Common myeloid progenitor, CD34-positive (primary cell): ENCODE measurements at regions of chr2 and their contacts with region 1.

Region 1: GRCh38 chr2:20962939-20963557 is 80.8 kb downstream of the APOB start:
- DNase-seq: peak; percentile 51 to 81 (median 68)
- H3K4me3 ChIP-seq: no peak overlapping the region
- H3K27ac ChIP-seq: no peak overlapping the region
- H3K4me1 ChIP-seq: no peaks in the 10 kb centered on the region
- H3K27me3 ChIP-seq: peaks cover 0 to 5% (median 4%) of the 10 kb centered on the region in 5 experiments

Region 2: DNA sequence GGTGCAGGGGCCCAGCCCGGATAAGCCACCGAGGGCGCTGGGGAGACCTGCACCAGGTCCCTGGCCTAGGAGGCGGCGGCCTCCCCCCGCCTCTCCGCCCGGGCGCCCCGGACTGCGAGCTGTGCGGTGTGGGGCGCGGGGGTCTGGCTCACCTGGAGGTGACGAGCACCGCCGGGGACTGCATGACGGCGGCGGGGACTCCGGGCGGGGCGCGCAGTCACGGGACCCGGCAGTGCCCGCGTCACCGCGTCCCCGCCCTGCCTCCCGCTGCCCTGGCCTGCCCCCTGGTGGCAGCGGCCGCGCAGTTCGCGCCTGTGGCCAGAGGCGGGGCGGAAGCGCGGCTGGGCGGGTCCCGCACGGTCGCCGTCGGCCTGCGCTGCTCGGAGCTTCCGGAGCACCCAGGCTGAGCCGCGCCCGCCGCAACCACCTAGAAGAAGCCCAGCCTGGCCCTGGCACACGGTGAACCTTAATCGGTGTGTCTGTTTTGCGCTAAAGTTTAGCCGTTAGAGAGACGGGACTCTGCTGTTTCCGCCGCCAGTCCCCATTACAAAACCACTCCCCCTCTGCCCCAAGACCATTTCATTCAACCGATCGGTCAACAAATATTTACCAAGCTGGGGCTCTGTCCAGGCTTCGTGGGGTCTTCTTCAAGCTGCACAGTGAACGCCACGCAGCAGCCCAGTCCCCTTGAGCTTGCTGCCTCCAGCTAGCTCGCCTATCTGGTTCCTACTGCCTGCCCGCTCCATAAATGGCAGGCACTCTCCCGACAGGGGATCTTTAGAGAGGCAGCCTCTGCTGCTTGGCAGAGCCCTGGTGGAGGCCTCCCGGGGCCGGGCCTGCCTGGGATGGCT is 311.9 kb before region 1 on chr2 and contains the start of gene HS1BP3:
- CTCF ChIA-PET with region 1: interaction called, 20 read pairs
- POLR2A ChIA-PET with region 1: no interaction called
- DNase-seq: peak; percentile 83 to 91 (median 91)
- H3K4me3 ChIP-seq: peak within 1 kb of the TSS; percentile 74 to 89 (median 81)
- H3K27ac ChIP-seq: peak within 1 kb of the TSS; percentile 64 to 88
- H3K4me1 ChIP-seq: peaks cover 2 to 29% (median 19%) of the 10 kb centered on the region in 4 experiments
- H3K27me3 ChIP-seq: no peaks in the 10 kb centered on the region

Region 3: DNA sequence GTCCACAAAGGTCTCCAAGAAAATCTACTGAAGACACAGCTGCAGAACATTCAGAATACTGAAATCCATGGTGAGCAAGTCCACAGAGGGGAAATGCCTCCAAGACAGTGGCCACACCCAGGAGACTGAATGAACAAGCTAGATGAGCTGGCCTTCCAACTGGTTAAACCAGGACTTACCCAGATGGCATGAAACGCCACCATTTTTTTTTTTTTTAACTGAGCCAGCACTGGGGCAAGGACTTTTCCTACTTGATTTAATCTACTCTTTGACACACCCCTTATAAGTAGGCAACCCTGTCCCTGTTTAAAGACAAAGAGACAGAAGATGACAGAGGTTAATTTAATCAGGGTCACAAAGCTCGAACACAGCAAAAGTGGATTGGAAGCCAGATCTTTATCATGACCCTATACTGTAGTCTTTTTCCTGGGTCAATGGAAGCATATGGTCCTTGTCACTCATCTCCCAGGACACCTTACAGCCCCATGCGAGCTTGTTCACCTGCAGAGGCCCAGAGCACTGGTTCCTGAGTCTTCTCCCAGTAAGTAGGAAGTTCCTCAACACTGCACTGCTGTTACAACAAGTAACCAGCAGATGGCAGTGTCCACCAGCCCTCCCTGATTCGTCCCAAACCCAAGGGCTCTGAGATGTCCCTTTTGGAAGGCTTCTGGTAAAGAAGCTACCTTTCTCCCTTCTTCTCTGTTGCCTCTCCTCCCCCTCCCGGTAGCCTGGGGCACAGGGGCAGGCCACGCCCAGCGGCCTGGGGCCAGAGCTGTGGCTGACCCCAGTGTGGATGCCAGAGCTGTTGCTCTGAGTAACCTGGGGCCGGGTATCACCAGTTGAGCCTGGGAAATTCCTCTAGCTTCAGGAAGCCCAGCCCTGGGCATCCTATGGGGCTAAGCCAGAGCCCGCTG is 301.7 kb before region 1 on chr2:
- CTCF ChIA-PET with region 1: interaction called, 115 read pairs
- POLR2A ChIA-PET with region 1: no interaction called
- DNase-seq: peak; percentile 73 to 82 (median 73)
- H3K4me3 ChIP-seq: no peak overlapping the region
- H3K27ac ChIP-seq: no peak overlapping the region
- H3K4me1 ChIP-seq: peaks cover 0 to 14% (median 11%) of the 10 kb centered on the region in 4 experiments
- H3K27me3 ChIP-seq: peaks cover 3 to 57% (median 39%) of the 10 kb centered on the region in 5 experiments

Region 4: DNA sequence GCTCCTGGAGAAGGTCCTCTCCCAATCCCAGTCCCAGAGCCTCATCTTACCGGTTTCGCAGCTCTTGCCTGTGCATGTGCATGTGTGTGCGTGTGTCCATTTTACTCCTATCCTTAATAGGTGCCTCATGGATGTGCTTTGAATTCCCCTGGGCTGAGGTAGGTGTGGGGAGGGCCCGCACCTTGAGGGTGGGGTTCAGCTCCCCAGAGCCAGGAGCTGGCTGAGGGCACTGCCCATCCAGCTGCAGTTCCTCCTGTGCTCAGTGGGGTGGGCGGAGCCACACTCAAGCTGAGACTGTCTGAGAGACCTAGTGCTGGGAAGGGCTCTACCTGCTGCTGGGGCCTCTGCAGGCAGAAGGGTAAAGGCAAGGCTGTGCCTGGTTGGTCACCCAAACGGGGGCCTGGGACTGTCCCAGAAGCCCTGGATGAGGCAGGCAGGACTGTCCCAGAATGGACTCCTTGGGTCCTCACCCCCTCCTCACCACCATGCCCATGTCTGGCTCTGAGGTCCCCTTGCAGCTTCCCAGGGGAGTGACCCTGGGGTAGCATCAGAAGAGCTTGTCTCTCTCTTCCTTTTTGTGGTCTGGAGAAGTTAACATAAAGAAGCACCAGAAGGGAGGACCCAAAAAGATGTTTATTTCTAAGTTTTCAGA is 287.2 kb before region 1 on chr2:
- CTCF ChIA-PET with region 1: interaction called, 33 read pairs
- POLR2A ChIA-PET with region 1: no interaction called
- DNase-seq: peak in 2 of 3 donors; percentile 59 to 61
- H3K4me3 ChIP-seq: no peak overlapping the region
- H3K27ac ChIP-seq: no peak overlapping the region
- H3K4me1 ChIP-seq: peaks cover 0 to 21% (median 9%) of the 10 kb centered on the region in 4 experiments
- H3K27me3 ChIP-seq: peaks cover 0 to 39% (median 20%) of the 10 kb centered on the region in 5 experiments

Region 5: DNA sequence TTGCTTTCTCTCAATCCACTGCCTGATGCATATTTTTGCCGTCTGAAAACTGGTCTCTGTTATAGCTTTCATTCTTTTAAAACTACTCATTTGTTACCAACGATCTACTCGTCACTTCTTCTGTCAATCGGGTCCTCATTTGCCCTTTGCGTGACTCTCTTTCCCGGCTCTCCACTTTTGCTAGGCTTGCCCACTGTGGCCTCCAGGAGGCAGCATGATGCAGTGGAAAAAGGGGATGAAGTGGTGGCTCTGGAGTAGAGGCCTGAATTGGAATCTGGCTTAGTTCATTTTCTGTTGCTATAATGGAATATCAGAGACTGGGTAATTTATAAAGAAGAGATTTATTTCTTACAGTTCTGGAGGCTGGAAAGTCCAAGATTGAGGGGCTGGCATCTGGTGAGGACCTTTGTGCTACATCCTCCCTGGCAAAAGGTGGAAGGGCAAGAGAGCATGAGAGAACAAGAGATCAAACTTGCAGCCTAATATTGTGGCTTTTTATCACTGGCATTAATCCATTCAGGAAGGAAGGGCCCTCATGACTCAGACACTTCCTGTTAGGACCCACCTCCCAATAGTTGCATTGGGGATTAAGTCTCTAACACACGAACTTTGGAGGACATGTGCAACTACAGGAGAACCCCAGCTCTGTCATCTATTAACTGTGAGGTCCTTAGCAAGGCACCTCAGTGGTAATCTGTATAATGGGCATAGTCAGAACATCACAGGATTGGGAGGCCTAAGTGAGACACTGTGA is 280.7 kb before region 1 on chr2:
- CTCF ChIA-PET with region 1: interaction called, 33 read pairs
- POLR2A ChIA-PET with region 1: no interaction called
- DNase-seq: peak in 1 of 3 donors; percentile 35
- H3K4me3 ChIP-seq: no peak overlapping the region
- H3K27ac ChIP-seq: no peak overlapping the region
- H3K4me1 ChIP-seq: peaks cover 0 to 8% (median 3%) of the 10 kb centered on the region in 4 experiments
- H3K27me3 ChIP-seq: no peaks in the 10 kb centered on the region

Region 6: GRCh38 chr2:20781656-20782265 is 181.3 kb before region 1 on chr2:
- CTCF ChIA-PET with region 1: interaction called, 13 read pairs
- POLR2A ChIA-PET with region 1: no interaction called
- DNase-seq: peak; percentile 25 to 31 (median 29)
- H3K4me3 ChIP-seq: no peak overlapping the region
- H3K27ac ChIP-seq: no peak overlapping the region
- H3K4me1 ChIP-seq: no peaks in the 10 kb centered on the region
- H3K27me3 ChIP-seq: no peaks in the 10 kb centered on the region